ENCODE measurements at regions of chr14 and their contacts with region 1.

Region 1: DNA sequence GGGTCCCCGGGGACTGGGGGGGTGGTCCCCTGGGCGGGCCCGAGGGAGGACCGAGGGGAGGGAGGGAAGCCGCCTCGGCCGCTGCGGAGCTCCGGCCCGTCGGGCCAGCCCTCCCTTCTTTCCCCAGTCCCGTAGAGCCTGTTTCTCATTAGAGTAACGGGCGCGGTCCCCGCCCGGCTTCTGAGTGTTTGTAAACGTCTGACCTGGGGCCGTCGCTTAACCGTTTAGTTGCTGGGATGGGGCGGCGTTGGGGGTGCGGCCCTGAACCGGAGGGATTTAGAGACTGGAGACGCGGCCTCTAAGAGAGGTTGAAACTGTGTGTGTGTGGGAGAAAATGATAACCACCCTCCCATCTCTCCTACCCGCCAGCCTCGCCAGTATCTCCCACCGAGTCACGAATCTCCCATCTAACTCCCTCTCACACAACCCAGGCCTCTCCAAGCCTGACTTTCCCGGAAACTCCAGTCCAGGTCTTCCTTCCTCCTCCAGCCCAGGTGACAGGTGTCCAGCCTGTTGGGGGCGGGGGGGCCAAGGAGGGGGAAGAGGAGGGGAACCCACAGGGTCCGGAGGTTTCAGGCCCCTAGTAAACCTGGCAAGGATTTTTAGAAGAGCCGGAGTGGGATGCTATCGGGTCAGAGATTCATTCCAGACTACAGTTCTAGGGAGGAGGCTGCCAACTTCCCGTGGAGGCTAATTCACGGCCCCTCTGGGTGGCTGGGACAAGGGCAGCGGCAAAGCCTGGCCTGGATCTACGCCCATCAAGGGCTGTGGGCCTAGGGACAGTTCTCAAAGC is 1.1 kb upstream of the NFATC4 start:
- DNase-seq: peak; percentile 94 to 98
- ATAC-seq: peak; percentile 93
- H3K4me3 ChIP-seq: peak overlapping the region; percentile 22 to 24
- H3K27ac ChIP-seq: peak overlapping the region; percentile 73 to 90
- H3K4me1 ChIP-seq: no peaks in the 10 kb centered on the region
- H3K27me3 ChIP-seq: no peaks in the 10 kb centered on the region

Region 2: GRCh38 chr14:24146978-24147760 is 219.7 kb before region 1 on chr14 and contains the start of gene RNF31:
- intact Hi-C with region 1: loop called in 1 of 2 experiments (anchors 2 kb)
- DNase-seq: peak; percentile 99
- ATAC-seq: peak; percentile 97
- H3K4me3 ChIP-seq: peak within 1 kb of the TSS; percentile 46 to 52
- H3K27ac ChIP-seq: peak within 1 kb of the TSS in 1 of 2 donors; percentile 61
- H3K4me1 ChIP-seq: no peaks in the 10 kb centered on the region
- H3K27me3 ChIP-seq: no peaks in the 10 kb centered on the region
- total RNA-seq, gene RNF31: 51.6 to 61.1 TPM

Region 3: GRCh38 chr14:24398653-24399446 is 31.9 kb after region 1 on chr14 and contains the start of gene NYNRIN:
- intact Hi-C with region 1: loop called in 1 of 2 experiments (anchors 2 kb)
- DNase-seq: peak; percentile 76 to 84
- ATAC-seq: peak; percentile 79
- H3K4me3 ChIP-seq: peak within 1 kb of the TSS; percentile 58 to 93
- H3K27ac ChIP-seq: no peak within 1 kb of the TSS
- H3K4me1 ChIP-seq: no peaks in the 10 kb centered on the region
- H3K27me3 ChIP-seq: no peaks in the 10 kb centered on the region
- total RNA-seq, gene NYNRIN: 11.2 to 31.6 TPM

Region 4: GRCh38 chr14:24431569-24432258 is 64.8 kb after region 1 on chr14:
- intact Hi-C with region 1: loop called (anchors 1 to 2 kb)
- DNase-seq: peak; percentile 95 to 96
- ATAC-seq: peak; percentile 85
- H3K4me3 ChIP-seq: no peak overlapping the region
- H3K27ac ChIP-seq: no peak overlapping the region
- H3K4me1 ChIP-seq: no peaks in the 10 kb centered on the region
- H3K27me3 ChIP-seq: no peaks in the 10 kb centered on the region

Region 5: GRCh38 chr14:24442273-24443052 is 75.5 kb after region 1 on chr14 and contains the start of gene SDR39U1:
- intact Hi-C with region 1: loop called in 1 of 2 experiments (anchors 2 kb)
- DNase-seq: peak; percentile 98 to 99
- ATAC-seq: peak; percentile 97
- H3K4me3 ChIP-seq: peak within 1 kb of the TSS; percentile 53 to 95
- H3K27ac ChIP-seq: peak within 1 kb of the TSS; percentile 91 to 95
- H3K4me1 ChIP-seq: no peaks in the 10 kb centered on the region
- H3K27me3 ChIP-seq: no peaks in the 10 kb centered on the region
- total RNA-seq, gene SDR39U1: 46.0 to 62.3 TPM

Measured in aorta (tissue), 5 donors.